Activated CD4-positive, alpha-beta memory T cell treated with anti-CD3 and anti-CD28 coated beads, Interleukin-2, amount 10 ng/mL, durations not matched to agents 7 days and 5 days (primary cell): ENCODE measurements at regions of chr6 and their contacts with region 1.

Region 1: DNA sequence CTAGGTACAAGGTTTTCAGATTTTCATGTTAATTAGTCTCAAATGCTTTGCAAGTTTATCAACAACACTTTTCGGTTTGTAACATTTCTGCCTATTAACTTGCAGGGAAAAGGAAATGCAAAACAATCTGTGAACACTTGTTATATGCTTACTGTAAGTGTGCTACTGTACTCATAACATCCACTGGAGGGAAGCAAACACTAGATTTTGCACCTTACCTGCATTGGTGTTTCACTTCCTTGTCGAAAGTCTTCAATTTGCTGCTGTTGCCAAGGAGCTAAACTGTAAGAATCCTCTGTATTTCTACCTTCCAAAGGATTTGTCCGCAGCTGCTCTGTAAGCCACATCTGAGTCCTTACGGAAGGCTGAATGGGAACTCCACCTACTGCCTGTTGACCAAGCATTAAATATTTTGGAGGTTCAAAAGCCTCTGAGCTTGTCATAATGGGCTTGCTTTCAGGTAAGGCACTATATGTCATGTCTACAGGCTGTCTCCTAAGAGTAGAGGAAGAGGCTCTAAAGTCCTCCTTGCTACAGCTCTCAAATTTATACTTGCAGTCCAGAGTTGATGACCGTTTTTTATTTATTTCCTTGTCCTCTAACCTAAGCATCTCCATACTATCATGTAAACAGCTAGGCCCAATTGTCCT is 17.3 kb downstream of the PLN start:
- DNase-seq: no peak
- H3K4me3 Mint-ChIP-seq: no peak overlapping the region
- H3K27ac Mint-ChIP-seq: peak overlapping the region; percentile 22
- H3K4me1 Mint-ChIP-seq: peaks cover 11% of the 10 kb centered on the region
- H3K27me3 Mint-ChIP-seq: no peaks in the 10 kb centered on the region

Region 2: DNA sequence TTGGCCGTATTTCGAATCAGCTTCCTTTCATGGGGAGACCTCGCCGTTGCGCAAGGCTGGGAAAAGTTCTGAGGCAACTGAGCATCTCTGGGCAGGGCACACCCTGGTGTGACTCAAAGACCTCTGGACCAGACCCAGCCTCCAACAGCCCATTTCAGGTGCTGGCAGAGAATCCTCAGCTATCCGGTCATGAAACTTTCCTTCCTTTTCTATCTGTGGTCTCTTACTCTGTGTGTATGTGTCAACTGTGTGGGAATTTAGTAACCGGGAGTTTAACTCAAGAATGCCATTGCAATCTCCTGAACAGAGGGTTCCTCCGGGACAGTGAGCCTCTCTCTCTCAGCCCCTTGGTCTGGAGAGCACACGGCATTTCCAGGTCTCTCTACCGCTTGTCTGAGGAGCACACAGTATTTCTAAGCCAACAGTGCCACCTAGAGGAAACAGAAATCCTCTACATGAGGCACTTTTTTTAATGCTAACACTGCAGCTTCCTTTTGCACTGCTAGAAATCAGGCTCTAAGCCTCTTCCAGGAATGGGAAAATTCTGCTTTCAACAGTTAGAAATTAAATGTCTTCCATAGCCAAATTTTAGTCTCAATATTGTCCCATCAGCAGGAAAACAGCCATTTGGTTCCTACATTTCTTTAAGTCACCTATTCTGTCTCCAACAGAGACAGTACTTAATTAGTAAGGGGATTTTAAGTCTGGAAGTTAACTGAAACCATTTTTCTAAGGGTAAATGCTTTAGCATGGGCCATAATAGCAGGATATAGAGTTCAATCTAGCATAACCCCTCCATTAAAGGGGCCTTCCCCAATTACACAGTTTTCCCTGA is 15.4 kb after region 1 on chr6:
- CTCF ChIA-PET with region 1: interaction called, 10 read pairs
- POLR2A ChIA-PET with region 1: no interaction called
- DNase-seq: no peak
- H3K4me3 Mint-ChIP-seq: no peak overlapping the region
- H3K27ac Mint-ChIP-seq: no peak overlapping the region
- H3K4me1 Mint-ChIP-seq: peaks cover 2% of the 10 kb centered on the region
- H3K27me3 Mint-ChIP-seq: no peaks in the 10 kb centered on the region

Region 3: DNA sequence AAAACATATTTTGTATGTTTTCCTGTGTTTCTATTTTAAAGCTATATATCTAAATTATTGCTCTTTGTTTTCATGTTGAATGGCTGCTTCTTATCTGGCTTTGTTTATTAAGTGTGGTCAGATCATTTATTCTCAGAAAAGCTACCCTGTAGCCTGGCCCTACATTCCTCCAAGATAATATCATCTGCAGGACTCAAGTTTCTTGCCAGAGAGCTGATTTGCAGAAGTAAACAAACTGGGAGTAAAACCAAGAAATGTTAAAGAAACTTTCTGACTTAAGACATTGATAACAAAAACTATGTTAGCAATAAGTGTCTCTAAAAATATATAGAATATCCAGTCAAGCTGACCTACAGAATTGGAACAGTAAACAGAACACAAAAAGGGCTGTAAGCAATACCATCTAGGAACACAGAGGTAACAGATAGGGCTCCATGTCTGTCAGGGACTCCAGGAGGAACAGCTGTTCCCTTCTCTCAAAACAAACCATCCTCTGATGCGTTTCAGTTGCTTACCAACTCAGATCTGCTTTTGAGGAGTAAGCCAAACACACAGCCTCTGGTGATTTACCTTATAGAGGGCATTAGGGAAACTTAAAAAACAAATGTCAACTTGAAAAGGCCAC is 103.4 kb after region 1 on chr6:
- CTCF ChIA-PET with region 1: no interaction called
- POLR2A ChIA-PET with region 1: no interaction called
- DNase-seq: no peak
- H3K4me3 Mint-ChIP-seq: no peak overlapping the region
- H3K27ac Mint-ChIP-seq: no peak overlapping the region
- H3K4me1 Mint-ChIP-seq: peaks cover 35% of the 10 kb centered on the region
- H3K27me3 Mint-ChIP-seq: no peaks in the 10 kb centered on the region

Region 4: GRCh38 chr6:118776607-118777549 is 211.4 kb after region 1 on chr6:
- CTCF ChIA-PET with region 1: interaction called, 12 read pairs
- POLR2A ChIA-PET with region 1: no interaction called
- DNase-seq: peak; percentile 71
- H3K4me3 Mint-ChIP-seq: no peak overlapping the region
- H3K27ac Mint-ChIP-seq: peak overlapping the region; percentile 0
- H3K4me1 Mint-ChIP-seq: peaks cover 12% of the 10 kb centered on the region
- H3K27me3 Mint-ChIP-seq: peaks cover 5% of the 10 kb centered on the region